Esophagus muscularis mucosa (tissue), 4 donors: ENCODE measurements at regions of chr9 and their contacts with region 1.

Region 1: DNA sequence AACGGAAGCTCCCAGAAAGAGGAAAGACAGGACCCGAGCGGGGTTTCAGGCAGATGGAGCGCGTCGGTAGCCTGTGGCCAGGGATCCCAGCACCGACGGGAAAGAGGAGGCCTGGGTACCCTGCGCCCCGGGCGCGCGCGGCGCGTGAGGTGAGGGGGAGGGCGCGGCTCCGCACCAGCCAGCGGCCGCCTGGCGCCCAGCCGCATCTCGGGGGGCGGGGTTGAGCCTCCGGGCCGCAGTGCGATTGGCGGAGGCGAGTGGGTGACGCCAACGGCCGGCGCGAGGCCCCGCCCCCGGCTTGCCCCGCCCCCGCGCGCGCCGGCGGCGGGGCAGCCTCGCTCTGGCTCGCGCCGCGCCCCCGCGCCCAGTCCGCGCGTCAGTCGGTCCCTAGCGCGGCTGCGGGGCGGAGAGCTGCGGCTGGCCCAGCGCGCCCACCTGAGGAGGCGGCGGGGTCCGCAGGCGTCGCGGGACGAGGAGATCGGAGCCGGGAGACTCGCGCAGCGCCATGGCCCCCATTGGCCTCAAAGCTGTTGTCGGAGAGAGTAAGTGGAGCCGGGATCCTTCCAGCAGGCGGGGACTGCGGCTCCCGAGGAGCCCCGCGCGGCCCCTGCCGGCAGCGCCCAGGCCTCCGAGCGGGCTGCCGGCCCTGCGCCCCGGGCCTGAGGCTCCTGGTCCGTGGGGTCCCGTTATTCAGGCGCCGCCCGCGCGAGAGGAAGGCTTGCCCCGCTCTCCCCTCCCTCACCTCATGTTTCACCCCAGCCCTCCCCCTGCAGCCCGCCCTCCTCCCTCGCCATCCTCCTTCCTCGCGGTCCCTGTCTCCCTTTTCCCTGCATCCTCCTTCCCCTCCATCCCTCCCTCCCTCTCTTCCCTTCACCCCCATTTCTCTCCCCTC is at the start of gene STXBP1:
- DNase-seq: peak; percentile 95
- H3K4me3 ChIP-seq: peak within 1 kb of the TSS; percentile 88 to 98 (median 95)
- H3K27ac ChIP-seq: peak within 1 kb of the TSS; percentile 90 to 95 (median 94)
- H3K4me1 ChIP-seq: peaks cover 11 to 42% (median 38%) of the 10 kb centered on the region in 4 donors
- H3K27me3 ChIP-seq: no peaks in the 10 kb centered on the region
- CTCF ChIP-seq: peak in 1 of 3 experiments; percentile 27
- EP300 ChIP-seq: no peak
- POLR2A ChIP-seq: peak; percentile 72
- total RNA-seq, gene STXBP1: 17.2 to 34.0 (median 19.8) TPM

Region 2: GRCh38 chr9:127503947-127504782 is 108.0 kb before region 1 on chr9:
- intact Hi-C with region 1: no loop called
- DNase-seq: peak; percentile 94
- H3K4me3 ChIP-seq: no peak overlapping the region
- H3K27ac ChIP-seq: peak overlapping the region in 3 of 4 donors; percentile 27 to 45 (median 31)
- H3K4me1 ChIP-seq: peaks cover 5 to 10% (median 6%) of the 10 kb centered on the region in 4 donors
- H3K27me3 ChIP-seq: no peaks in the 10 kb centered on the region
- CTCF ChIP-seq: peak; percentile 86 to 87 (median 87)
- EP300 ChIP-seq: no peak
- POLR2A ChIP-seq: no peak

Region 3: DNA sequence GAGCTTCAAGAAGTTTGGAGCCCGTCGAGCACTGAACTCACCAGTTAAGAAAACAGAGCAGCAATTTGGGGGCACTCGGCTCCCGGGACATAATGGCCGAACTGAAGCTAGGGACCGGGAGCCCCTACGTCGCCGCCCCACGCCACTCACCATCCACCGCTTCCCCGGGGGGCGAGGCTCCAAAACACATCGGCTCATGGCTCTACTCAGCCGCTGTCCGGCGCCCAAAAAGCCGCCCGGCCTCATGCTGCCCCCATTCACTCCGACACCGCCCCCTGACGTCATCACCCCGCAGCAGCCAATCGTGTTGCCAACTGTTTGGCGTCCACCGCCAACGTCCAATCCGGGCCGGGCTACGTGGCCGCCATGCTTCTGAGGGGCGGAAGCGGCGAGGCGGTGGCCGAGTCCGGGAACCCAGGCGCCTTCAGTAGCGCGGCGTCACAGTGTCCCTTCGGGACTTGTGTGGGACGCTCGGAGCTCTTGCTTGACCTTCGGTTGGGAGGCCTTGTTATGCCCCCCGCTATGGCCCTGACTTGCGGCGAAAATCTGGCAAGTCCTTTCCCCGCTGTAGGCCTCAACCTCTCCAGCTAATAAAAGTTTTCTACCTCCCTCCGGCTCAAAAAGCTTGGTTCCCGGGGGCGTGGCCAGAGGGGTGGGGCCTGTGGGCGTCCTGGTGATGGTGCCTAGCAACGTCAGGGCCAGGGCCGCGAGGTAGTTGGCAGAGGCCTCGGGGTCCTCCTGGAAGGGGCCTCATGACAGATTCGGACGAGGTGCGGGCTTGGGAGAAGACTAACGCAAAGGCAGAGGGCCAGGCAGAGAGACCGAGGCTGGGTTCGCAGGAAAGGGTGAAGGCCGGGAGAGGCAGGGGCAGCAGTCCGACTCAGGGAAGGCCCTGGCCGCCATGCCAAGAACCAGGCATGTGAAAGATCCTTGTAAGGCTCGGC is 103.5 kb after region 1 on chr9 and contains the starts of genes PTRH1 and TTC16:
- intact Hi-C with region 1: loop called (anchors 5 kb)
- DNase-seq: peak; percentile 99
- H3K4me3 ChIP-seq: peak within 1 kb of the TSS; percentile 77 to 87 (median 78)
- H3K27ac ChIP-seq: peak within 1 kb of the TSS; percentile 75 to 88 (median 82)
- H3K4me1 ChIP-seq: peaks cover 16 to 26% (median 21%) of the 10 kb centered on the region in 4 donors
- H3K27me3 ChIP-seq: peaks cover 0 to 5% (median 0%) of the 10 kb centered on the region in 4 donors
- CTCF ChIP-seq: no peak
- EP300 ChIP-seq: no peak
- POLR2A ChIP-seq: no peak
- total RNA-seq, gene PTRH1: 16.8 to 23.5 (median 20.5) TPM
- total RNA-seq, gene TTC16: under 0.01 to 0.17 (median 0.11) TPM in 3 of 4 donors, not detected in the other